Aorta (tissue), 5 donors: ENCODE measurements at regions of chr15 and their contacts with region 1.

Region 1: DNA sequence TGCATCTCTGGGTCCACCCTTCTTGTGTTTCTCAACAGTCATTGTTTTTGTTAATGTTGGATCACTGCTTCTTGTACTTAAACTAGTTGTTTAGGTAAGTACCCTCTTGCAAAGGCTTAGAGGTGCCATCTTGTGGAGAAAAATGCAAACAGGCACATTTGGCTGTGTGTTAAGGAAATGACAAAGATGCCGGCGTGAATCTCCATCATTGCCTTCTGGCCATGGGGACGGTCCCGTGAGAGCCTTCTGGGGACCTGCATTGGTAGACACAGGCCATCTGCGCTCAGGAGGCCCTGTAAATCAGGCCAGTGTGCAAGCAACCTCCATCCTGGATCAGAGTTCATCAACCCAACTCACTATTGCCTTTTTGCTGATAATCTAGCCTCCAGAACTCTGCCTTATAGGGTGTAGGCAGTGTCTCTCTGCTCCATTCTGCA is 158.6 kb upstream of the NR2E3 start:
- DNase-seq: no peak
- ATAC-seq: peak; percentile 34
- H3K4me3 ChIP-seq: no peak overlapping the region
- H3K27ac ChIP-seq: no peak overlapping the region
- H3K4me1 ChIP-seq: peaks cover 7 to 10% of the 10 kb centered on the region in 2 donors
- H3K27me3 ChIP-seq: no peaks in the 10 kb centered on the region

Region 2: DNA sequence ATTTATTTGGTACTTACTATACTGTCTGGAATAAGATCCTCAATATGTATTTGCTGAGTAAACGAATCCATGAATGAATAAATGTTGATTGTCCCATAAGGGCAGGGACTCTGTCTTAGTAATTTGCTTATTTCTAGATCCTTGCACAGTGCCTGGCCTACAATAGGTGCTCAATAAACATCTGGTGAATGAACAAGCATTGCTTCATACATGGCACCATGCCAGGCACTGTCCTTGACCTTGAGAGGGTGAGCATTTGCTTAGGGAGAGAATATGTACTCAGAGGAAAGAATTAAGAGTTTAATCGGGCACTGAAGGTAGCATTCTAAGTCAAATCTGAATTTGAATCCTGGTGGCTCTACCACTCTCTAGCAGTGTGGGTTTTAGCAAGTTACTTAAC is 254.4 kb before region 1 on chr15:
- intact Hi-C with region 1: no loop called
- DNase-seq: no peak
- ATAC-seq: no peak
- H3K4me3 ChIP-seq: no peak overlapping the region
- H3K27ac ChIP-seq: no peak overlapping the region
- H3K4me1 ChIP-seq: peaks cover 1 to 19% of the 10 kb centered on the region in 2 donors
- H3K27me3 ChIP-seq: no peaks in the 10 kb centered on the region

Region 3: GRCh38 chr15:71596672-71597071 is 55.1 kb before region 1 on chr15:
- intact Hi-C with region 1: loop called in 1 of 2 experiments (anchors 10 kb)
- DNase-seq: peak in 1 of 2 donors; percentile 61
- ATAC-seq: peak; percentile 79
- H3K4me3 ChIP-seq: no peak overlapping the region
- H3K27ac ChIP-seq: peak overlapping the region in 1 of 2 donors; percentile 76
- H3K4me1 ChIP-seq: peaks cover 4 to 10% of the 10 kb centered on the region in 2 donors
- H3K27me3 ChIP-seq: no peaks in the 10 kb centered on the region

Region 4: GRCh38 chr15:71691458-71692417 is 40.0 kb after region 1 on chr15:
- intact Hi-C with region 1: no loop called
- DNase-seq: no peak
- ATAC-seq: peak; percentile 71
- H3K4me3 ChIP-seq: peak overlapping the region in 1 of 2 donors; percentile 14
- H3K27ac ChIP-seq: no peak overlapping the region
- H3K4me1 ChIP-seq: peaks cover 4 to 11% of the 10 kb centered on the region in 2 donors
- H3K27me3 ChIP-seq: no peaks in the 10 kb centered on the region

Region 5: GRCh38 chr15:71707230-71708050 is 55.7 kb after region 1 on chr15:
- intact Hi-C with region 1: loop called in 1 of 2 experiments (anchors 10 kb)
- DNase-seq: no peak
- ATAC-seq: peak; percentile 76
- H3K4me3 ChIP-seq: no peak overlapping the region
- H3K27ac ChIP-seq: peak overlapping the region in 1 of 2 donors; percentile 26
- H3K4me1 ChIP-seq: peaks cover 3 to 5% of the 10 kb centered on the region in 2 donors
- H3K27me3 ChIP-seq: no peaks in the 10 kb centered on the region